Head of caudate nucleus (tissue), 42 donors: ENCODE measurements at regions of chr2 and their contacts with region 1.

Region 1: DNA sequence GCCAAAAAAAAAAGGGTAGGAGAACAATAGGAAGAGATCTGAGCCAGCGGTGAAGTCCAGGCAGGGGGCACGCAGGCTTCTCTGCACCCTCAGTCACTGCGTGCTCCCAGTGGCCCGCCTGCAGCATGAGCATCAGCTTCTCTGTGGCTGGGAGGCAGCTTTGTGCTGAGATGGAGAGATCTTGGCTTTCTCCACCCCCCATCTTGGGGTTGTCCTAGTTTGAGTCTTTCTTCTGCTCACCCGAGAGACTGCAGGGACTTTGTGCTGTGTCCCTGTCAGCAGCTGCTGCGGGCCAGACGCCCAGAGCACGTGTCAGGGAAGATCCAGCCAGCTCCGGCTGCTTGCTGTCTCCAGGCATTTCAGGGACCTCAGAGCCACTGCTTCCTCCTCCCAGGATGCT is 20.3 kb downstream of the TRAPPC12 start:
- DNase-seq: peak; percentile 71 to 94 (median 87)

Region 2: GRCh38 chr2:3302731-3303582 is 96.9 kb before region 1 on chr2:
- intact Hi-C with region 1: no loop called
- DNase-seq: no peak

Region 3: GRCh38 chr2:3459185-3460015 is 59.6 kb after region 1 on chr2:
- intact Hi-C with region 1: loop called (anchors 5 kb)
- DNase-seq: peak in 3 of 42 donors; percentile 9 to 44 (median 25)